ENCODE measurements at regions of chr2 and their contacts with region 1.

Region 1: GRCh38 chr2:229431327-229431954 is 160.4 kb upstream of the PID1 start:
- DNase-seq: no peak
- H3K4me3 ChIP-seq: no peak overlapping the region
- H3K27ac ChIP-seq: no peak overlapping the region
- H3K4me1 ChIP-seq: no peaks in the 10 kb centered on the region
- H3K27me3 ChIP-seq: no peaks in the 10 kb centered on the region
- CTCF ChIP-seq: peak in 2 of 3 experiments; percentile 30 to 36; a peak in 2 of 4 replicates
- EP300 ChIP-seq: no peak
- POLR2A ChIP-seq: no peak
- RAD21 ChIP-seq: peak in 1 of 2 experiments; percentile 55

Region 2: GRCh38 chr2:229443546-229444268 is 12.3 kb after region 1 on chr2:
- CTCF ChIA-PET with region 1: interaction called, 11 read pairs
- POLR2A ChIA-PET with region 1: no interaction called
- DNase-seq: no peak
- H3K4me3 ChIP-seq: no peak overlapping the region
- H3K27ac ChIP-seq: no peak overlapping the region
- H3K4me1 ChIP-seq: no peaks in the 10 kb centered on the region
- H3K27me3 ChIP-seq: no peaks in the 10 kb centered on the region
- CTCF ChIP-seq: no peak
- EP300 ChIP-seq: no peak
- POLR2A ChIP-seq: no peak
- RAD21 ChIP-seq: no peak

Region 3: GRCh38 chr2:229578052-229578846 is 146.8 kb after region 1 on chr2:
- CTCF ChIA-PET with region 1: interaction called, 21 read pairs
- POLR2A ChIA-PET with region 1: no interaction called
- DNase-seq: no peak
- H3K4me3 ChIP-seq: no peak overlapping the region
- H3K27ac ChIP-seq: no peak overlapping the region
- H3K4me1 ChIP-seq: peaks cover 0 to 5% (median 4%) of the 10 kb centered on the region in 4 experiments; a peak in 3 of 7 replicates
- H3K27me3 ChIP-seq: no peaks in the 10 kb centered on the region
- CTCF ChIP-seq: peak in 2 of 3 experiments; percentile 48 to 60; a peak in 3 of 4 replicates
- EP300 ChIP-seq: no peak
- POLR2A ChIP-seq: no peak
- RAD21 ChIP-seq: peak; percentile 53 to 66

Measured in H1 (cell line).